ENCODE measurements at regions of chr1 and their contacts with region 1.

Region 1: GRCh38 chr1:211944733-211945500 is 90.4 kb downstream of the INTS7 start:
- DNase-seq: no peak
- ATAC-seq: peak in 1 of 2 donors; percentile 58
- H3K4me3 ChIP-seq: no peak overlapping the region
- H3K27ac ChIP-seq: no peak overlapping the region
- H3K4me1 ChIP-seq: peaks cover 0 to 4% of the 10 kb centered on the region in 2 donors
- H3K27me3 ChIP-seq: no peaks in the 10 kb centered on the region
- CTCF ChIP-seq: peak in 2 of 5 experiments; percentile 19 to 42
- POLR2A ChIP-seq: no peak

Region 2: DNA sequence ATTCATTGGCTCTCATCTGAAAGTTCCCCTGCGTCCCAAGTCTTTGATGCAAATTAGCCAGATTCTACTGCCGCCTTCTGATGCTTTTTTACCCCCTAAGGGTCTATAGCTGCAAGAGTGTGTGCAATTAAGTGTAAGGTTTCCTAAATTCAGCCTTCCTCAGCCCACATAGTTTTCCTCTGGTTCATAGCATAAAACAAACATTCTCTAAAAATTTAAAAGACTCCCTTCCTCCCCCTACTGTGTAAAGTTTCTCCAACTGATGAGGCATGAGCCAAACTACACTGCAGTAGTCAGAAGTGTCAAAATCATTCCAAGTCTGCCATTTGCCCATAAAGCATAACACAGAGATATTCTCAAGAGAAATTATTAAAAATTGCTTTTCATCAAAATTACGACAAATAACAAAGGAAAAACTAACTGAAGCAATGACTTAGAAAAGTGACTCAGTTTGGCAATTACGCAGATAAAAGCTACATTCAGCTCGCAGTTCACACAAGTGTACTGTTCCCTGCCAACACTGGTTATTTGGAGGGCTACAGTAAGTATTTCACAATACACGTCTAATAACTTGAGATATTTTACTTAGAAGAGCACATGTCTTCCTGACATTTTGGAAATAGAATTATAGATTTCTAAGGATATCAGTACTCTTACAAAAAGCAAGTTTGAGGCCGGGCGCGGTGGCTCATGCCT is 826.4 kb before region 1 on chr1:
- in situ Hi-C with region 1: no loop called
- intact Hi-C with region 1: no loop called
- DNase-seq: no peak
- ATAC-seq: peak; percentile 39 to 44
- H3K4me3 ChIP-seq: no peak overlapping the region
- H3K27ac ChIP-seq: no peak overlapping the region
- H3K4me1 ChIP-seq: no peaks in the 10 kb centered on the region
- H3K27me3 ChIP-seq: no peaks in the 10 kb centered on the region
- CTCF ChIP-seq: no peak
- POLR2A ChIP-seq: no peak

Region 3: DNA sequence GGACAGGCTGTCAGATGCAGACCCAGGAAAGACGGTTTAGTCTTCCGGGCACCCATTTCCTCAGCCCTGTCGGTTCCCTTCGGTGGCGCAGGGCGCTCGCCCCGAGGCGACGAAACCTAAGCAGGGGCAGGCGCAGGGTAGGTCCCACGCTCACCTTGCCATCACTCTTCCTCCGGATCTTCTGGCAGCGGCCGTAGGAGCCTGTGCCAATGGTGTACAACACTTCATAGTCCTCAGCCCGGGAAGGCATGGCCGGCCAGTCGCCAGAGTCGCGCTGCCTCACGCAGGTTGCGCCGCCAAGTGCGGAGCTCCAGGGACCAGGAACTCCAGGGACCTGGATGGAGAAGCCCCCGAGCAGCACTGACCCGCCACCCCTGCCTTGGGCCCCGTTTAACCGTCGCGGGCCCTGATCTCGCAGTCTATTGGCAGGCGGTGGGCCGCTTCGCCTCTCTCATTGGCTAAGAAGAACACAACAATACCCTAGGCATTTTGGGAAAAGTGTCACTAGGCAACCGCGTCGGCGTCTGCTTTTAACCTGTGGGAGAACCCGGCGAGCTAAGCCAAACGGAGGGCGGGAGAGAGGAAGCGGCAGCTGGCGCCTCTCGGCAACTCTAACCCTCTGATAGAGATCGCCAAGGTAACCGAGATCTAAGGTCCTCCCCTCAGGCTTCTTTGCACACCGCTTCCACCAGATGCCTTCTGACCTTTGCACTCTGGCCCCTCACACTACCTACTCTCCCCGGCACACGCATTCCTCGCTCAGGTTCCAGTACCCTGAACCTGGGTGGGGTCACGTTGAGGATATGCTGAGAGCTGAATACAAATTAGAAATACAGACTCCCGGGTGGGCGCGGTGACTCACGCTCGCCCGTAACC is 269.4 kb before region 1 on chr1 and contains the start of gene NEK2:
- in situ Hi-C with region 1: no loop called
- intact Hi-C with region 1: loop called (anchors 2 kb)
- DNase-seq: peak; percentile 48 to 68
- ATAC-seq: peak; percentile 92 to 95
- H3K4me3 ChIP-seq: peak within 1 kb of the TSS; percentile 48 to 74 (median 52)
- H3K27ac ChIP-seq: no peak within 1 kb of the TSS
- H3K4me1 ChIP-seq: peaks cover 8 to 12% of the 10 kb centered on the region in 2 donors
- H3K27me3 ChIP-seq: peaks cover 0 to 3% (median 0%) of the 10 kb centered on the region in 3 donors
- CTCF ChIP-seq: no peak
- POLR2A ChIP-seq: no peak
- total RNA-seq, gene NEK2: not detected

Measured in gastrocnemius medialis (tissue), 4 donors.